Activated CD8-positive, alpha-beta T cell treated with anti-CD3 and anti-CD28 coated beads for 36 hours (primary cell): ENCODE measurements at regions of chr12 and their contacts with region 1.

Region 1: GRCh38 chr12:9647825-9648700 is 21.4 kb upstream of the CLEC2D start:
- DNase-seq: peak; percentile 95
- ATAC-seq: peak; percentile 72
- H3K4me3 Mint-ChIP-seq: peak overlapping the region; percentile 98
- H3K27ac Mint-ChIP-seq: peak overlapping the region; percentile 99
- H3K4me1 Mint-ChIP-seq: peaks cover 53% of the 10 kb centered on the region
- H3K27me3 Mint-ChIP-seq: no peaks in the 10 kb centered on the region
- CTCF ChIP-seq: no peak

Region 2: DNA sequence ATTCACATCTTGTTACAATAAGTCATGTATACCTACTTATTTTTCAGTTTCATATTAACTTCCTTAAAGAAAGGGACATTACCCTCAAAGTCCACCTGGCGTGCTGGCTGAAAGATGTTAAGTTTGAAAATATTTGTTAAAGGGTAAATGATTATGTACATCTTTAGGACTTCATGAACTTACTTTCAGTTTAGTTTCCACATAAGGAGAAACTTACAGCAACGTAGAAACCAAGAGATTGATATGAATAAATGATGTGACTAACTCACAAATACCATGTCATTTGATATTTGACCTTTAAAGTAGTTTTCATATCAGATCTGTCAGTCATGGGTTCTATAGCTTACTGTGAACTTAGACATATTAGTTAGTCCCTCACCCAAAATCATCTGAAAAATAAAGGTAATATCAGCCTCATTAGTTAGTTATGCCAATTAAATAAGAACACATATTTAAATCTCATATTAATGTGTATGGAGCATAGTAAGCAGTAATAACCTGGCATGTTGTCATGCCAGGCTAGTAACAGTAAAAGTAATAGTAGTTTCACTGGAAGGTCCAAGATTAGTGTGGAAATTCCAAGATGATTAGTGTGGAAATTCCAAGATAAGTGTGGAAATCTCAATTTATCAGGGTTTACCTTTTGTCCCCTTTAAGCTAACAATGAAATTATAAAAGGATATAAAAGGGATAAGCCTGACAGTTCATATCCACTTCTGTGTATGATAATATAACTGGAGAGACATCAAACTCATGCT is 19.5 kb after region 1 on chr12:
- CTCF ChIA-PET with region 1: interaction called, 13 read pairs
- POLR2A ChIA-PET with region 1: interaction called, 745 read pairs
- intact Hi-C with region 1: loop called (anchors 1 kb)
- DNase-seq: peak; percentile 69
- ATAC-seq: peak; percentile 60
- H3K4me3 Mint-ChIP-seq: peak overlapping the region; percentile 94
- H3K27ac Mint-ChIP-seq: peak overlapping the region; percentile 99
- H3K4me1 Mint-ChIP-seq: peaks cover 52% of the 10 kb centered on the region
- H3K27me3 Mint-ChIP-seq: no peaks in the 10 kb centered on the region
- CTCF ChIP-seq: no peak

Region 3: DNA sequence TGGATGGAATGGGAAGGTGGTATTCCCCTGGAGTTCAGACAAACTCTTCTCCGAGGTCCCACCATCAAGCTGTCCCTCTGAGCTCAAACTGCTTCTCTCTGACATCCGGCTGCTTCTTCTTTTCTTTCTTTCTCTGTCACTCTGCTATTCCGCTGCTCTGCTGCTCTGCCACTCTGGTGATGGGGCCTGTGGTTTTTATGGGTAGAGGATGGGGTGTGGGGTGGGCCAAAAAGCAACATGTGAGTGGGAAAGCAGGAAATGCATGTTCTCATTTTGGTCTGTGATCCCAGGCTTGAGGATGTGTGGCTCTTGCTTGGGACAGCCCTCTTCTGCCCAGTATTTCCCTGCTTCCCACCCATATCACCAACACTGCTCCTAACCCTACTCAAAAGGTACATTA is 54.2 kb after region 1 on chr12:
- CTCF ChIA-PET with region 1: interaction called, 9 read pairs
- POLR2A ChIA-PET with region 1: interaction called, 11 read pairs
- intact Hi-C with region 1: no loop called
- DNase-seq: peak; percentile 80
- ATAC-seq: peak; percentile 58
- H3K4me3 Mint-ChIP-seq: peak overlapping the region; percentile 71
- H3K27ac Mint-ChIP-seq: peak overlapping the region; percentile 95
- H3K4me1 Mint-ChIP-seq: peaks cover 72% of the 10 kb centered on the region
- H3K27me3 Mint-ChIP-seq: no peaks in the 10 kb centered on the region
- CTCF ChIP-seq: no peak

Region 4: GRCh38 chr12:9797722-9798619 is 149.9 kb after region 1 on chr12:
- CTCF ChIA-PET with region 1: no interaction called
- POLR2A ChIA-PET with region 1: interaction called, 11 read pairs
- intact Hi-C with region 1: loop called (anchors 5 kb)
- DNase-seq: peak; percentile 84
- ATAC-seq: peak; percentile 83
- H3K4me3 Mint-ChIP-seq: peak overlapping the region; percentile 74
- H3K27ac Mint-ChIP-seq: peak overlapping the region; percentile 86
- H3K4me1 Mint-ChIP-seq: peaks cover 47% of the 10 kb centered on the region
- H3K27me3 Mint-ChIP-seq: no peaks in the 10 kb centered on the region
- CTCF ChIP-seq: peak; percentile 80